ENCODE measurements at regions of chr17 and their contacts with region 1.

Region 1: GRCh38 chr17:7280519-7281429 is 744 bp upstream of the SLC2A4 start:
- DNase-seq: peak; percentile 83 to 92 (median 92)
- ATAC-seq: peak; percentile 73 to 77
- H3K4me3 ChIP-seq: peak overlapping the region; percentile 37
- H3K27ac ChIP-seq: peak overlapping the region; percentile 92
- H3K4me1 ChIP-seq: no peaks in the 10 kb centered on the region
- H3K27me3 ChIP-seq: no peaks in the 10 kb centered on the region

Region 2: GRCh38 chr17:7296189-7296902 is 15.6 kb after region 1 on chr17:
- intact Hi-C with region 1: loop called in 3 of 4 experiments (anchors 1 to 2 kb)
- DNase-seq: peak; percentile 86 to 95 (median 94)
- ATAC-seq: peak; percentile 83 to 84
- H3K4me3 ChIP-seq: no peak overlapping the region
- H3K27ac ChIP-seq: peak overlapping the region; percentile 71
- H3K4me1 ChIP-seq: peaks cover 12% of the 10 kb centered on the region
- H3K27me3 ChIP-seq: no peaks in the 10 kb centered on the region

Measured in right cardiac atrium (tissue), 5 donors.